Aorta (tissue), 5 donors: ENCODE measurements at regions of chr9 and their contacts with region 1.

Region 1: GRCh38 chr9:134171316-134172197 is 7.2 kb upstream of the RNU6ATAC start:
- DNase-seq: no peak
- ATAC-seq: no peak
- H3K4me3 ChIP-seq: no peak overlapping the region
- H3K27ac ChIP-seq: no peak overlapping the region
- H3K4me1 ChIP-seq: no peaks in the 10 kb centered on the region
- H3K27me3 ChIP-seq: no peaks in the 10 kb centered on the region

Region 2: DNA sequence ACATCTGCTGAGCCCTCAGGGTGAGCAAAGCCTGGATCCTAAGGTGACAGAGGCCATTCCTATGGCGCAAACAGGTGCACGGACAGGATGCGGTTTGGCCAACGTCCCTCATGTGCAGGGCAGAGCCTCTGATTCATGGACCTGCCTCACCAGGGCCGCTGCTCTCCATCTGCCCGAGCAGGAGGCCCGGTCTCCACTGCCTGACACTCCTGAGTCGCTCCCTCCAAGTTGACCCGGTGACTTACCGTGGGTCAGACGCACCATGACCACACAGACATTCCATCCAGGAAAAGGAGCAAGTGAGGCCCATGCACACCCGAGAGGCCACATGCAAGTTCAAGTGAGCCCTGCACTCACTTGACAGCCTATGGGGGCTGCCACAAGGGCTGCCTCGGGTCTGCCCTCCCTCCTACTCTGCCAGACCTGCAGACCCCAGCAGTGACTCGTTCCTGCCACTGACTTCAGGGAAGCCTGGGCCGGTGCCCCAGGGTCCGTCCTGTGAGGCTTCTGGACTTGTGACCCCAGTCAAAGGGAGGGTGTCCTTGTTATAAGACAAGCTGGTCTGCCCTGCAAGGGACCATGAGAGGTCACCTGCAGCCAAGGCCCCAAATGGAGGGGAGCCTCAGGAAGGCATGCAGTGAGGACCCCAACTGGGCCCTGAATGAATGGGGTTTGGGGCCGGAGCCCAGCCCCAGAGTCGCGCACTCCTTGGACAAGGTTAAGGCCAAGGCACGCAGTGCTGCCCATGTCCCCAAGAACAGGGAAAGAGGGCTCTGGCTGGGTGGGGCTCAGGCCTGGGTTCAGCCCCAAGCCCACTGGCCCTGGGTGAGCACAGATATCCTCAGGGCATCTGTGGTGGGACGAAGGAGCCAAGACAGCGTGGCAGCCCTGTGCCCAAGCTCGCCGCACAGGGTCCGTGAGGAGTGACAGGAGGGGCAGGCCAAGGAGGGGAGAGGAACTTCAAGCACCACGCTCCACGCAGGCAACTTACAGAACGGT is 136.2 kb before region 1 on chr9:
- intact Hi-C with region 1: no loop called
- DNase-seq: peak in 1 of 2 donors; percentile 66
- ATAC-seq: no peak
- H3K4me3 ChIP-seq: no peak overlapping the region
- H3K27ac ChIP-seq: no peak overlapping the region
- H3K4me1 ChIP-seq: no peaks in the 10 kb centered on the region
- H3K27me3 ChIP-seq: no peaks in the 10 kb centered on the region

Region 3: DNA sequence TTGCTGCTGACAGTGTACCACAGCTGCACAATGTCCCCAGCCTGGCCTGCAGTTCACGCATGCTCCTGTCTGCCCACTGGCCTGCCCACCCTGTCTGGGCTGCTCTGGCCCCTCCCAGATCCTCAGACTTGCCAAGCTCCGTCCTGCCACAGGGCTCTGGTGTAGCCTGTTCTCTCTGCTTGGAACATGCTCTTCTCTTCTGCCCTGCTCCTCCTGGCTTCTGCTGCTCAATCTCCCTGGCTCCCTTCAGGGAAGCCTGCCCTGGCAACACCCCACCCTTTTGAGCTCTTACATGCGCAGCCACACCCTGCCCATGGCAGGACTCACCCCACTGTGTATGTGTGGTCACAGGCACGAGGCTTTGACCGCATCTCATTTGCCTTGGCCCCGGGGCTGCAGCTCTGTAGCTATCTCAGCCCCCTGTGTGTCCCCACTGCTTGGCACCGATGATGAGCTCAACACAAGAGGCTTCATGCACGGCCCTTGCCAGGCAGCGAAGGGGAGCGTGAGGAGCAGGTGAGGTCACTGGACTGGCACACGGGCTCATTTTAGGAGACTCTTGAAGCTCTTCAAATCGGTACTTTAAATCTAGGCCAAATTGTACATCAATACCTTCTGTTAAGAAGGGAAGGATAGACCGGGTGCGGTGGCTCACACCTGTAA is 83.4 kb before region 1 on chr9:
- intact Hi-C with region 1: no loop called
- DNase-seq: no peak
- ATAC-seq: no peak
- H3K4me3 ChIP-seq: no peak overlapping the region
- H3K27ac ChIP-seq: no peak overlapping the region
- H3K4me1 ChIP-seq: no peaks in the 10 kb centered on the region
- H3K27me3 ChIP-seq: no peaks in the 10 kb centered on the region

Region 4: GRCh38 chr9:134283111-134283515 is 111.6 kb after region 1 on chr9:
- intact Hi-C with region 1: loop called in 1 of 2 experiments (anchors 5 kb)
- DNase-seq: peak; percentile 77 to 93
- ATAC-seq: peak; percentile 75
- H3K4me3 ChIP-seq: no peak overlapping the region
- H3K27ac ChIP-seq: peak overlapping the region in 1 of 2 donors; percentile 6
- H3K4me1 ChIP-seq: no peaks in the 10 kb centered on the region
- H3K27me3 ChIP-seq: no peaks in the 10 kb centered on the region

Region 5: DNA sequence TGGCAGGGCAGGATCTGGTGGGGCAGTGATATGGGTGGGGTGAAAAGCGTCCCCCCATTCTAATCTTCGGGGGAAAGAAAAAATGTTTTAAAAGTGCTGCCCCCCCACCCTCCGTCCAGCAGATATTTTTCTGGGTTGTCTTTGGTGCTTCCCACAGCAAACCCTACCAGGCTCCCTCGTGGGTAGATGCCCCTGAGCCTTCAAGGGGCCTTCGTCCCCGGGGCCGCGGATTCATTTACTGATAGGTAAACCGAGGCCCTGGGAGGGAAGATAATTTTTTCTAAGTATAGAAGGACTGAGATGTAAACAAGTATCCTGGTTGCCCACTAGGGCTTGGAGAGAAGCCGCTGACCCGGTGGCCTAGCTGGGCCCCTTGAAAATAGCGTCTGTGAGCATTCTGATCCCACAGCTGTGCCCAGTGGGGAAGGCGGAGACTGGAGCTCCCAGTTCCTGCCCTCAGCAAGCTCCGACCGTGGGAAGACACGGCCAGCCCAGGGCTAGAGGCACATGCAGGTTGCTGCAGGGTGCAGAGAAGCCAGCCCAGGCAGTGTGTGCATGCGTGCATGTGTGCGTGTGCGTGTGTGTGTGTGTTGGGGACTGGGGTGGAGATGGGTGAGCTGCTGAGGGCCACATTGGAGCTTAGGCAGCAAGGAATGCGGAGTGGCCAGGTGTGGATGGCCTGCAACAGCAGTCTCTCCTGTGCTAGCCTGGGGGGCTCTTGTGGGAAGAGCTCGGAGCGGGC is 148.7 kb after region 1 on chr9:
- intact Hi-C with region 1: loop called in 1 of 2 experiments (anchors 2 kb)
- DNase-seq: peak in 1 of 2 donors; percentile 65
- ATAC-seq: no peak
- H3K4me3 ChIP-seq: no peak overlapping the region
- H3K27ac ChIP-seq: no peak overlapping the region
- H3K4me1 ChIP-seq: no peaks in the 10 kb centered on the region
- H3K27me3 ChIP-seq: no peaks in the 10 kb centered on the region

Region 6: DNA sequence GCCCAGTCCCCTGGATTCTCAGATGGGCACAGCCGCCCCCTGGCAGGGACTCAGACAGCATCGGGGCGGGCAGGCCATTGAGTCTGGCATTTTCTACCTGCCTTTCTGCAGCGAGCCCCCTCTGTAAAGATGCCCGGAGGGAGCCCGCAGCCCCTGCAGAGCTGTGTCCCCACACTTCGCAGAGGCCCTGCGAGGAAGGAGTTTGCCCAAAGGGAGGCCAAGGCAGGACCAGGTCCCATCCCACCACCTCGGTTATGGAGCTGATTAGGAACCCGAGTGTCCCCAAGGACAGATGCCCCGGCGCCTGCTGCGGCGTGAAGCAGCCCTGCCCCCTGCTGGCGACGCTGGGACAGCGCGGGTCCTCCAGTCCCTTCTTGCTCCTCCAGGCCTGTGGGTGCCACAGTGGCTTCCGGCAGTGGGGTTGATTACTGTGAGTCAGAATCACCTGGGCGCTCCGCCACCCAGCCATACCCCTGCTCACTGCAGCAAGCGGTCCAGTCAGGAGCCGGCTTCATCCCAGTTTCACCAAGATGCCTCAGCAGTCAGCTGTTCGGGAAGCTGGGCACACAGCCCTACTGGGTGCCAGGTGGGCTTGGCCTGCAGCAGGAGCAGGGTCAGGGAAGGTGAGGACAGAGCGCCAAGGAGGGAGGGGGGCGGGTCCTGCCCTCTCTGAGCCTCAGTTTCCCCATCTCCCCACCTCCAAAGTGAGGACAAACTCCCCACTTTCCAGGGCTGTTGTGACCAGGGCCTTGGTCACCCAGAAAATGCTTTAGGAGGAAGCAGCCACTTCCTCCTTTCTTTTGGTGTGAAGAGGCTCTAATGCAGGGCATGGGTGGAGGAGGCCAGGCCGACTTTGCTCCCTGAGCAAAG is 271.8 kb after region 1 on chr9:
- intact Hi-C with region 1: loop called (anchors 1 kb)
- DNase-seq: peak; percentile 92 to 95
- ATAC-seq: peak; percentile 92
- H3K4me3 ChIP-seq: no peak overlapping the region
- H3K27ac ChIP-seq: no peak overlapping the region
- H3K4me1 ChIP-seq: no peaks in the 10 kb centered on the region
- H3K27me3 ChIP-seq: no peaks in the 10 kb centered on the region